K562 (cell line): ENCODE measurements at regions of chr2 and their contacts with region 1.

Region 1: GRCh38 chr2:189960346-189960745 is 102.2 kb downstream of the MSTN start:
- DNase-seq: no peak
- ATAC-seq: no peak
- H3K4me3 ChIP-seq: no peak overlapping the region
- H3K27ac ChIP-seq: no peak overlapping the region
- H3K4me1 ChIP-seq: no peaks in the 10 kb centered on the region
- H3K27me3 ChIP-seq: no peaks in the 10 kb centered on the region
- CTCF ChIP-seq: no peak
- EP300 ChIP-seq: no peak
- POLR2A ChIP-seq: no peak
- RAD21 ChIP-seq: no peak

Region 2: DNA sequence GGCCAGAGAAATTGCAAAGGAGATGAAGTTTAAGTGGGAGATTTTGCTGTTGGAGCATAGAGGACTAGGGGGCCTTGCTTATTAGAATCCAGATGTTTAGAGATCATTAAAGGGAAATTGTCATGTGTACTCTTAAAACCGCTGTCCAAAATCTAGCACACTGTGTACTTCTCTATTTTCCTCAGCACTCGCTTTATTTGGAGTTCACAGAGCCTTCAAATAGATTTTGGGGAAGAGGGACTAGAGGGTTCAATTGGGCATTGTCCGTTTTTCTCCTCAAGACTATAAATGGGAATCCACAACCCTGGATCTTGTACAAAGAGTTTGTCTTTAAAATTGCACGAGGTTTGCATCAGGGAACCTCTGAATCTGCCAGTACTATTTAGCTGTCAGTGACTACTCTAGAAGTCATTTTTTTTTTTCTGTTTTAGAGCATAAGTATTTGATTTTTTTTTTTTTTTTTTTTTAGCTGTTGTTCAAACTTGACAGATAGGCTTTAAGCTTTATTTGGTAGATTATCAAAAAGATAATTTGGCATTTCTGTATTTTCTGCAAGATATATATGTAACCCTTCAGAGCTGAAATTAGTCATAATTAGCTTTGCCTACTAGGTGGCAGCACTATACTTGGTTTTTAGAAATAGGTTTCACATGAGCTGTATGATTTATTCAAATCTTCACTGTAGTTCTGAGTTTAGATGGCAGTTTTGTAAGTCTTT is 161.9 kb before region 1 on chr2:
- CTCF ChIA-PET with region 1: no interaction called
- POLR2A ChIA-PET with region 1: no interaction called
- in situ Hi-C with region 1: no loop called
- intact Hi-C with region 1: loop called (anchors 10 kb)
- DNase-seq: no peak
- ATAC-seq: peak; percentile 74
- H3K4me3 ChIP-seq: no peak overlapping the region
- H3K27ac ChIP-seq: no peak overlapping the region
- H3K4me1 ChIP-seq: no peaks in the 10 kb centered on the region
- H3K27me3 ChIP-seq: no peaks in the 10 kb centered on the region
- CTCF ChIP-seq: peak; percentile 8 to 45 (median 26); a peak in 3 of 6 replicates
- EP300 ChIP-seq: no peak
- POLR2A ChIP-seq: no peak
- RAD21 ChIP-seq: peak; percentile 18 to 49; a peak in 3 of 4 replicates